ENCODE measurements at regions of chr12 and their contacts with region 1.

Region 1: DNA sequence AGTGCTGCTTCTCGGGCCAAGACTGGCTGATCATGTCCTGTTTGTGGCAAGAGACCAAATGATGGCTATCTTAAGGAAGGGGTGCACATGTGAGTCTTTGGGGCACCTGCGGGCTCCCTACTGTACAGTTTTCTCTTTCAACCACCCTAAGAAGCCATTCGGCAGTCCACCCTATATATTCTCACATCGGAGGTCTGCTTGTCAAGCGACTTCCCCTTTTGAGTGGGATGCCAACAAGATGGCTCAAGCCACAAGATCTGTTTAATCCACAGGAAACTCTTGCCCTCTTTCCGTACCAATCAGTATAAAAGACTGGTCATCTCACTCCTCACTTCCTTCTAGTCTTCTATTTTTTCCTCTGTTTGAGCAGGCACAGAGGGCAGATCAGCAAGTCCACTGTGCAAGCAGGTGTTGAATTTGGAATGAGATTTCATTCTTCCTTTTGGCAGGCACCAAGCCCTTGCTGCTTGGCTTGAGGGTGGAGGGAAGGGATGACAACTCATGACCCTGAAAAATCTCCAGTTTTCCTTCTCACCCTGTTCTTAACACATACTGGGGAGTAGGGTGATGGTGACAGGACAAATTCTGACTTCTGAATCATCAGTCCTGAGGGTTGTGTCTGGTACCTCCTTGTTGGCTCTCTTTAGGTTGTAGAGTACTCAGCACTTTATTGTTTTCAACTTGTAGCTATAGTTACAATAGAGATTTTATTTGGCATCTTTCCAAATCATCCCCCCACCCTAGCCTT is 17.6 kb downstream of the LACRT start:
- DNase-seq: no peak
- ATAC-seq: no peak
- H3K4me3 Mint-ChIP-seq: no peak overlapping the region
- H3K27ac Mint-ChIP-seq: no peak overlapping the region
- H3K4me1 Mint-ChIP-seq: peaks cover 2% of the 10 kb centered on the region
- H3K27me3 Mint-ChIP-seq: peaks cover 34% of the 10 kb centered on the region

Region 2: GRCh38 chr12:54379401-54380201 is 237.5 kb before region 1 on chr12:
- CTCF ChIA-PET with region 1: no interaction called
- POLR2A ChIA-PET with region 1: no interaction called
- intact Hi-C with region 1: no loop called
- DNase-seq: peak; percentile 96
- ATAC-seq: peak; percentile 86
- H3K4me3 Mint-ChIP-seq: peak overlapping the region; percentile 47
- H3K27ac Mint-ChIP-seq: no peak overlapping the region
- H3K4me1 Mint-ChIP-seq: peaks cover 10% of the 10 kb centered on the region
- H3K27me3 Mint-ChIP-seq: no peaks in the 10 kb centered on the region

Region 3: GRCh38 chr12:54596526-54596946 is 20.6 kb before region 1 on chr12:
- CTCF ChIA-PET with region 1: interaction called, 11 read pairs
- POLR2A ChIA-PET with region 1: no interaction called
- intact Hi-C with region 1: no loop called
- DNase-seq: peak; percentile 75
- ATAC-seq: peak; percentile 73
- H3K4me3 Mint-ChIP-seq: no peak overlapping the region
- H3K27ac Mint-ChIP-seq: no peak overlapping the region
- H3K4me1 Mint-ChIP-seq: peaks cover 3% of the 10 kb centered on the region
- H3K27me3 Mint-ChIP-seq: peaks cover 8% of the 10 kb centered on the region

Region 4: GRCh38 chr12:54603173-54603814 is 13.8 kb before region 1 on chr12:
- CTCF ChIA-PET with region 1: interaction called, 10 read pairs
- POLR2A ChIA-PET with region 1: no interaction called
- intact Hi-C with region 1: no loop called
- DNase-seq: peak; percentile 78
- ATAC-seq: peak; percentile 93
- H3K4me3 Mint-ChIP-seq: no peak overlapping the region
- H3K27ac Mint-ChIP-seq: no peak overlapping the region
- H3K4me1 Mint-ChIP-seq: peaks cover 6% of the 10 kb centered on the region
- H3K27me3 Mint-ChIP-seq: peaks cover 13% of the 10 kb centered on the region